ENCODE measurements at regions of chr12 and their contacts with region 1.

Region 1: GRCh38 chr12:59699421-59700152 is 103.8 kb downstream of the SLC16A7 start:
- DNase-seq: peak in 1 of 9 experiments; percentile 20
- ATAC-seq: no peak
- H3K4me3 ChIP-seq: no peak overlapping the region
- H3K4me3 Mint-ChIP-seq: no peak overlapping the region
- H3K27ac ChIP-seq: no peak overlapping the region
- H3K27ac Mint-ChIP-seq: no peak overlapping the region
- H3K4me1 ChIP-seq: no peaks in the 10 kb centered on the region
- H3K4me1 Mint-ChIP-seq: peaks cover 31% of the 10 kb centered on the region
- H3K27me3 ChIP-seq: no peaks in the 10 kb centered on the region
- H3K27me3 Mint-ChIP-seq: no peaks in the 10 kb centered on the region
- CTCF ChIP-seq: no peak

Region 2: GRCh38 chr12:59649203-59649602 is 50.4 kb before region 1 on chr12:
- CTCF ChIA-PET with region 1: no interaction called
- POLR2A ChIA-PET with region 1: no interaction called
- intact Hi-C with region 1: no loop called
- DNase-seq: no peak
- ATAC-seq: no peak
- H3K4me3 ChIP-seq: no peak overlapping the region
- H3K4me3 Mint-ChIP-seq: no peak overlapping the region
- H3K27ac ChIP-seq: no peak overlapping the region
- H3K27ac Mint-ChIP-seq: no peak overlapping the region
- H3K4me1 ChIP-seq: peaks cover 16% of the 10 kb centered on the region
- H3K4me1 Mint-ChIP-seq: peaks cover 40% of the 10 kb centered on the region
- H3K27me3 ChIP-seq: no peaks in the 10 kb centered on the region
- H3K27me3 Mint-ChIP-seq: no peaks in the 10 kb centered on the region
- CTCF ChIP-seq: no peak

Region 3: GRCh38 chr12:59660148-59660547 is 39.4 kb before region 1 on chr12:
- CTCF ChIA-PET with region 1: no interaction called
- POLR2A ChIA-PET with region 1: no interaction called
- intact Hi-C with region 1: loop called in 1 of 2 experiments (anchors 5 kb)
- DNase-seq: no peak
- ATAC-seq: no peak
- H3K4me3 ChIP-seq: no peak overlapping the region
- H3K4me3 Mint-ChIP-seq: no peak overlapping the region
- H3K27ac ChIP-seq: no peak overlapping the region
- H3K27ac Mint-ChIP-seq: no peak overlapping the region
- H3K4me1 ChIP-seq: peaks cover 4% of the 10 kb centered on the region
- H3K4me1 Mint-ChIP-seq: peaks cover 66% of the 10 kb centered on the region
- H3K27me3 ChIP-seq: no peaks in the 10 kb centered on the region
- H3K27me3 Mint-ChIP-seq: no peaks in the 10 kb centered on the region
- CTCF ChIP-seq: no peak

Region 4: GRCh38 chr12:59763835-59764234 is 64.2 kb after region 1 on chr12:
- CTCF ChIA-PET with region 1: no interaction called
- POLR2A ChIA-PET with region 1: no interaction called
- intact Hi-C with region 1: no loop called
- DNase-seq: no peak
- ATAC-seq: no peak
- H3K4me3 ChIP-seq: no peak overlapping the region
- H3K4me3 Mint-ChIP-seq: no peak overlapping the region
- H3K27ac ChIP-seq: no peak overlapping the region
- H3K27ac Mint-ChIP-seq: no peak overlapping the region
- H3K4me1 ChIP-seq: no peaks in the 10 kb centered on the region
- H3K4me1 Mint-ChIP-seq: peaks cover 15% of the 10 kb centered on the region
- H3K27me3 ChIP-seq: no peaks in the 10 kb centered on the region
- H3K27me3 Mint-ChIP-seq: no peaks in the 10 kb centered on the region
- CTCF ChIP-seq: no peak

Region 5: GRCh38 chr12:59874781-59875180 is 175.2 kb after region 1 on chr12:
- CTCF ChIA-PET with region 1: no interaction called
- POLR2A ChIA-PET with region 1: no interaction called
- intact Hi-C with region 1: no loop called
- DNase-seq: no peak
- ATAC-seq: no peak
- H3K4me3 ChIP-seq: no peak overlapping the region
- H3K4me3 Mint-ChIP-seq: no peak overlapping the region
- H3K27ac ChIP-seq: no peak overlapping the region
- H3K27ac Mint-ChIP-seq: no peak overlapping the region
- H3K4me1 ChIP-seq: no peaks in the 10 kb centered on the region
- H3K4me1 Mint-ChIP-seq: no peaks in the 10 kb centered on the region
- H3K27me3 ChIP-seq: no peaks in the 10 kb centered on the region
- H3K27me3 Mint-ChIP-seq: no peaks in the 10 kb centered on the region
- CTCF ChIP-seq: no peak